ENCODE measurements at regions of chr6 and their contacts with region 1.

Region 1: GRCh38 chr6:32885698-32886286 is 31.8 kb downstream of the PSMB9 start:
- DNase-seq: peak; percentile 63
- CTCF ChIP-seq: peak; percentile 50

Region 2: GRCh38 chr6:32741031-32741960 is 144.5 kb before region 1 on chr6 and contains the start of gene HLA-DQA2:
- CTCF ChIA-PET with region 1: no interaction called
- POLR2A ChIA-PET with region 1: no interaction called
- DNase-seq: no peak
- CTCF ChIP-seq: no peak

Region 3: DNA sequence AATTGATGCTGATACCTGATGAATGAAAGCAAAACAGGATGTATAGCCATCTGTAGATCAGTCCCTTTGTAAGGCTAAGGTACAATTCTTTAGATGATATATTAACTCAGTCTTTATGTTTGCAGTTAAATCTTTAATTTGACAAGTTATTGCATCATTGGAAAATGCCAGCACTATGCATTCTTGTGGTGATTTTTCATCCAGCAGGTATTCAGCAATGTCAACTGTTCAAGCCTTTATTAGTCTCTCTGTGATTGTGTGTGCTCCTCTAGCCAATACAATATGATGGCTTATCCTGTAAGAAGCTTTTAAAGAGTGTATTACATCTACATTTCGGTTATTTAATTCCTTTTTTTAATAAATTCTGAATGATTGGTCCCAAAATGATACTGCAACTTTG is 20.7 kb after region 1 on chr6:
- CTCF ChIA-PET with region 1: interaction called, 11 read pairs
- POLR2A ChIA-PET with region 1: no interaction called
- DNase-seq: no peak
- CTCF ChIP-seq: no peak

Region 4: GRCh38 chr6:32940656-32941213 is 54.9 kb after region 1 on chr6 and contains the start of gene HLA-DMB:
- CTCF ChIA-PET with region 1: interaction called, 12 read pairs
- POLR2A ChIA-PET with region 1: no interaction called
- DNase-seq: peak; percentile 87
- CTCF ChIP-seq: no peak

Region 5: GRCh38 chr6:32947552-32948465 is 62.0 kb after region 1 on chr6:
- CTCF ChIA-PET with region 1: interaction called, 15 read pairs
- POLR2A ChIA-PET with region 1: interaction called, 3 read pairs
- DNase-seq: no peak
- CTCF ChIP-seq: peak; percentile 82

Region 6: DNA sequence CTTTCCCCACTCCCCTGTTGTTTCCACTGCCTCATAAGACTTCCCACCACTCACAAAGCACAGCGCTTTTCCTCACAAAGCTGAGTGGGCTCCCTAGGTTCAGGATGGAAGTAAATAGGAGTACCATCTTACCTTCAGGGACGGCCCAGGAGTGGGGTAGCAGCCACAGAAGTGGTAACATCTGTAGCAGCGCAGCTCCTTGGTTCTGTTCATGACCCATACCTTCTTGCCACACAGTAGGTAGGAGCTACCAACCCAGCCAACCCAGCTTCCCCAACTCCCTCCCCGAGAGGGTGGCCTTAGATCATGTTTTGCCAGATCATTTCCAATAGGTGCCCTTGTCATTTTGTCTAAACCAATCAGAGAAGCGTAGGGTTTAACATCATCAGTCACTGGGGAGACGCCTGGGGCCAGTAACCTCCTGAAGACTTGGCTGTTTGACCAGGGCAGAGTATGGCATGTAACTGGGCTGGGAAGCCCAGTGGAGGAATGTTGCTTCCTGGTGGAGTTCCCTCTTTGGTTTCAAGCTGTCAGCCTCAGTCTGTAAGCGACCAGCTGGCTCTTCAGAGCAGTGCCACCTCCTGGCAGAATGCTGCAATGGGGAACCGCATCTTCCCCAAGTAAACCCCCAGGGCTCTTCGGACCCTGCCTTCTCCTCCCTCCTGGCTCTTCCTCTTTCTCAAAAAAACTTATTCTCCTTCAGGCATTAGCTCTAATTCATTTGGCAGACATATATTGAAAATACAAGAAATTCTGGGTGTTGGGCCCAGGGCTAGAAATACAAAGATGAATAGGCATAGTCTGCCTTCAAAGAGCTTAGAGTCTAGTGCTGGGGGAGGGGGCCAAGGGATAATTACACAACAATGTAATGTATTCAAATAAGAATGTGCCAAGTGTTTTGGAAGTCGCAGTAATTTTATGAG is 67.3 kb after region 1 on chr6 and contains the start of gene HLA-DMA:
- CTCF ChIA-PET with region 1: interaction called, 15 read pairs
- POLR2A ChIA-PET with region 1: interaction called, 3 read pairs
- DNase-seq: peak; percentile 86
- CTCF ChIP-seq: peak; percentile 56

Measured in GM10248 (cell line).